MCF 10A (cell line): ENCODE measurements at regions of chr5 and their contacts with region 1.

Region 1: DNA sequence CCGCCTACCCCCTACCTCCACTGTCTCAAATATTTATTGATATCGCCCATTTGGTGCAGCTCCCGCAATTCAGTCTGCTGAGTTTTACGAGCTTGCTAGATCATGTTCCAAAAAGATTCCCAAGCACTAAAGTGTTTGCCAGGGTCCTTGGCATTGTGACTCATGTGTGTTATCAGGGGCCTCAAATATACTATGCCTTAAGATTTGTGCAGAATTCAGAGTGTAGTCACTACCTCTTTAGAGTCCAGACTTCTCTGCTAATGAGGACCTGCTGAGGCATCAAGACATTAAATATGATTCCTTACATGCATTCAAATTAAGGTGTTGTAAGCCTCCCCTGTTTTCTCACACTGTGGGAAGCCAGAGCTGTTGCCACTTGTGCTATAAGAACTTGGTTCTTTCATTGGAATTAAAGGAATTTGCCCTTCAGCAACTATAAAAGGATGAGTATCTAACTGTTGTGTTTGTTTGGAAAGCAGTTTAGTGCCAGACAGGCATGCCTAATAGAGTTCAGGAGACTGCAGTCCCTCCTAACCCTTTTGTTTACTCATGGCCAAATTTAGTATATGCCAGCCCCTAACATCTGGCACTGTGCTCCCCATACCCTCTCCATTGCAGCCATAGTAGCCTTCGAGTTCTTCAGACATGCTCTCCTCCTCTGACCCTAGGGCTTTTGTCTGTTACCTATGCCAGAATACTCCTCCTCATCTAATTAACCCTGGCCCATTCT is 316.4 kb downstream of the NR3C1 start:
- DNase-seq: peak; percentile 67
- H3K4me3 Mint-ChIP-seq: no peak overlapping the region
- H3K27ac Mint-ChIP-seq: peak overlapping the region; percentile 32
- H3K4me1 Mint-ChIP-seq: peaks cover 14% of the 10 kb centered on the region
- H3K27me3 Mint-ChIP-seq: no peaks in the 10 kb centered on the region
- CTCF ChIP-seq: no peak

Region 2: GRCh38 chr5:143061161-143061945 is 25.7 kb before region 1 on chr5:
- CTCF ChIA-PET with region 1: interaction called, 4 read pairs
- POLR2A ChIA-PET with region 1: interaction called, 32 read pairs
- intact Hi-C with region 1: no loop called
- DNase-seq: peak; percentile 69
- H3K4me3 Mint-ChIP-seq: peak overlapping the region; percentile 6
- H3K27ac Mint-ChIP-seq: peak overlapping the region; percentile 81
- H3K4me1 Mint-ChIP-seq: peaks cover 49% of the 10 kb centered on the region
- H3K27me3 Mint-ChIP-seq: no peaks in the 10 kb centered on the region
- CTCF ChIP-seq: no peak

Region 3: DNA sequence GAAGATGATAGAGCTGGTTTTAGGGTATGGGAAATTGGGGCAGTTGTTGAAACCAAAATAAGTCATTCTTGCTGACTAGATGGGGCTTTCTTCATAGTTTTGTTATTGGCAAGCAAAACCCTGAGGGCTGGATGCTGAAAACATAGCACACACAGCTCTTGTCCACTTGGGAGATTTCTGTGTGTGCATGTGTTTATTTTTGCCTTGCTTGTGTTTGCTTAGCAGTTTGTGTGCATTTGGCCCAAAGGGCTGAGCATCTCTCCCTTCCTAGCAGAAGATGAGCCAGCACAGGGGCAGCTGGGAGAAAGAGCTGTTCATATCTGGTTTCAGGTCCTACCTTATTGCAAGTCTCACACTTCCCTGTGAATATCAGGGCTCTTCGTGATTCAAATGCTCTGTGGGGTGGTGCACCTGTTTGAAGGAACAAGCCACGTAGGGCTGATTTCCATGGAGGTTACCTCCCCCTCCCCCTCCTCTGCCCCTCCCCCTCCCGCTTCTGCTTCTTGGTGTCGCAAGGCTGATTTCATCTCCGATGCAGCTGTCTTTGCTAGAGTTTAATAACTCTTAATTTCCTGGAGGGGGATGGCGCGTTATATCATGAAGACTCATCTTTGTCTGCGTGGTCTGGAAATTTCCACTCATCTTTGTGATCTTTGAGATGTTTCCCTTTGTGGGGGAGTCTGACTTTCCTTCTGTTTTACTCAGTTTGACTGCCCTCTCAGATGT is 20.4 kb before region 1 on chr5:
- CTCF ChIA-PET with region 1: interaction called, 3 read pairs
- POLR2A ChIA-PET with region 1: interaction called, 32 read pairs
- intact Hi-C with region 1: no loop called
- DNase-seq: no peak
- H3K4me3 Mint-ChIP-seq: no peak overlapping the region
- H3K27ac Mint-ChIP-seq: no peak overlapping the region
- H3K4me1 Mint-ChIP-seq: peaks cover 32% of the 10 kb centered on the region
- H3K27me3 Mint-ChIP-seq: no peaks in the 10 kb centered on the region
- CTCF ChIP-seq: no peak

Region 4: GRCh38 chr5:143074414-143074996 is 12.6 kb before region 1 on chr5:
- CTCF ChIA-PET with region 1: interaction called, 3 read pairs
- POLR2A ChIA-PET with region 1: interaction called, 25 read pairs
- intact Hi-C with region 1: no loop called
- DNase-seq: peak; percentile 56
- H3K4me3 Mint-ChIP-seq: no peak overlapping the region
- H3K27ac Mint-ChIP-seq: peak overlapping the region; percentile 11
- H3K4me1 Mint-ChIP-seq: peaks cover 8% of the 10 kb centered on the region
- H3K27me3 Mint-ChIP-seq: no peaks in the 10 kb centered on the region
- CTCF ChIP-seq: no peak